ENCODE measurements at regions of chr20 and their contacts with region 1.

Region 1: GRCh38 chr20:5205348-5206210 is 78.8 kb downstream of the CDS2 start:
- DNase-seq: peak; percentile 64 to 78
- ATAC-seq: peak; percentile 81 to 97 (median 97)
- H3K4me3 ChIP-seq: no peak overlapping the region
- H3K27ac ChIP-seq: no peak overlapping the region
- H3K4me1 ChIP-seq: no peaks in the 10 kb centered on the region
- H3K27me3 ChIP-seq: no peaks in the 10 kb centered on the region
- CTCF ChIP-seq: peak; percentile 75

Region 2: GRCh38 chr20:5448449-5449118 is 243.0 kb after region 1 on chr20:
- intact Hi-C with region 1: loop called (anchors 1 to 10 kb)
- DNase-seq: no peak
- ATAC-seq: peak in 1 of 4 donors; percentile 58
- H3K4me3 ChIP-seq: no peak overlapping the region
- H3K27ac ChIP-seq: no peak overlapping the region
- H3K4me1 ChIP-seq: no peaks in the 10 kb centered on the region
- H3K27me3 ChIP-seq: peaks cover 0 to 4% (median 0%) of the 10 kb centered on the region in 3 donors
- CTCF ChIP-seq: peak; percentile 55

Measured in psoas muscle (tissue), 8 donors.